ENCODE measurements at regions of chr5 and their contacts with region 1.

Region 1: GRCh38 chr5:151651997-151652645 is 34.6 kb downstream of the SPARC start:
- DNase-seq: peak; percentile 61 to 83 (median 78)
- H3K4me3 ChIP-seq: no peak overlapping the region
- H3K4me3 Mint-ChIP-seq: no peak overlapping the region
- H3K27ac ChIP-seq: no peak overlapping the region
- H3K27ac Mint-ChIP-seq: peak overlapping the region in 1 of 7 donors; percentile 5
- H3K4me1 ChIP-seq: peaks cover 15% of the 10 kb centered on the region in 2 donors
- H3K4me1 Mint-ChIP-seq: peaks cover 15% of the 10 kb centered on the region
- H3K27me3 ChIP-seq: no peaks in the 10 kb centered on the region
- H3K27me3 Mint-ChIP-seq: peaks cover 1 to 3% (median 1%) of the 10 kb centered on the region in 3 donors
- CTCF ChIP-seq: peak; percentile 92

Region 2: GRCh38 chr5:151447174-151448037 is 204.7 kb before region 1 on chr5 and contains the start of gene SLC36A1:
- intact Hi-C with region 1: loop called (anchors 2 to 5 kb)
- DNase-seq: peak; percentile 91 to 93 (median 91)
- H3K4me3 ChIP-seq: peak within 1 kb of the TSS; percentile 79 to 97 (median 84)
- H3K4me3 Mint-ChIP-seq: peak within 1 kb of the TSS; percentile 92 to 97
- H3K27ac ChIP-seq: peak within 1 kb of the TSS; percentile 50 to 96
- H3K27ac Mint-ChIP-seq: peak within 1 kb of the TSS; percentile 89 to 97 (median 94)
- H3K4me1 ChIP-seq: peaks cover 22 to 31% of the 10 kb centered on the region in 2 donors
- H3K4me1 Mint-ChIP-seq: peaks cover 35% of the 10 kb centered on the region
- H3K27me3 ChIP-seq: no peaks in the 10 kb centered on the region
- H3K27me3 Mint-ChIP-seq: peaks cover 0 to 2% (median 0%) of the 10 kb centered on the region in 3 donors
- CTCF ChIP-seq: peak; percentile 95
- polyA plus RNA-seq, gene SLC36A1: 5.3 to 29.4 (median 6.8) TPM

Region 3: DNA sequence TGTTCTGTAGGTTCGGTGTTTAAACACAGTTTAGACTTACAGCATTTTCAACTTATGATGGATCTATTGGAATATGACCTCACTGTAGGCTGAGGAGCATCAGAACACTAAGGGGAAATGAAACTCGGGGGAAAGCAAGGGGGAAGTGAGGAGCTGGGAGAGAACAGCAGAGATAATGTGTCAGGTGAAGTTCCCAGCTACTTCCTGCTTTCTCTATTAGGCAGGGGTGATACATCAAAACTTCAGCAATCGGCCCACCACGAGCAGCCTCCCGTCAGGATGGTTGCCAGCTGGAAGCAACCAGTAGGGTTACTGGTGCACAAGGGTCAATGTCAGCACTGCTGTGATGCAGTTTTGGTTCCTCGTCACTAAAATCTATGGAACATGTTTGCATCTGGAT is 95.3 kb before region 1 on chr5:
- intact Hi-C with region 1: loop called in 1 of 2 experiments (anchors 5 kb)
- DNase-seq: peak; percentile 84 to 95 (median 89)
- H3K4me3 ChIP-seq: peak overlapping the region in 1 of 3 experiments; percentile 17
- H3K4me3 Mint-ChIP-seq: peak overlapping the region in 1 of 2 donors; percentile 26
- H3K27ac ChIP-seq: peak overlapping the region in 1 of 2 donors; percentile 25
- H3K27ac Mint-ChIP-seq: peak overlapping the region in 5 of 7 donors; percentile 69 to 81 (median 75)
- H3K4me1 ChIP-seq: peaks cover 26 to 27% of the 10 kb centered on the region in 2 donors
- H3K4me1 Mint-ChIP-seq: peaks cover 19% of the 10 kb centered on the region
- H3K27me3 ChIP-seq: no peaks in the 10 kb centered on the region
- H3K27me3 Mint-ChIP-seq: peaks cover 0 to 2% (median 0%) of the 10 kb centered on the region in 3 donors
- CTCF ChIP-seq: no peak

Region 4: DNA sequence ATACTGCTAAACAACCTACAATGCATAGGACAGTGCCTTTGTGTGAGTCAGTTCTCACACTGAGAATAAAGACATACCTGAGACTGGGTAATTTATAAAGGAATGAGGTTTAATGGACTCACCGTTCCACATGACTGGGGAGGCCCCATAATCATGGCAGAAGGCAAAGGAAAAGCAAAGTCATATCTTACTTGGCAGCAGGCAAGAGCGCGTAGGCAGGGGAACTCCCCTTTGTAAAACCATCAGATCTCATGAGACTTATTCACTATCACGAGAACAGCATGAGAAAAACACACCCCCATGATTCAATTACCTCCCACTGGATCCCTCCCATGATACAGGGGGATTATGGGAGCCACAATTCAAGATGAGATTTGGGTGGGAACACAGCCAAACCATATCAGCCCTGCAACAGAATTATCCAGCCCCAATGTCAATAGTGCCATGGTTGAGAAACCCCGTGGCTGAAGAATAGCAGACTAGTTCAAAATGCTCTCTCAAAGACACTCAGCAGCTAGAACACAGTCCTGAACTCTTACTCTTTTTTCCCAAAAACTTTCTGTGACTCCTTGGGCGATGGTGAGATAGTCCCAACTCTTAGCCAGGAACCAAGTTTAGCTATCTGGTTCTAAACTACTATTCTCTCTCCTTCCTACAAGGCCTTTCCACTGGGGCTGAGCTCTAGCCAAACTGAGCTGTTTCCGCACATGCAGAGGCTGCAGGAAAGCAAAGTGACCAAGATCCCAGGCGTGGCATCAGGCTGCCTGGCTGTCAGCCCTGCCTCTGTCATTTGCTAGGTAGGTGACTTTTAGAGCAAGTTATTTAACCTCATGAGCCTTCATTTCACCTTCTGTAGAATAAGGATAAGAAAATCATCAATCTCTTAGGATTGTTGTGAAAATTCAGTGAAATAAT is 82.7 kb before region 1 on chr5:
- intact Hi-C with region 1: no loop called
- DNase-seq: no peak
- H3K4me3 ChIP-seq: no peak overlapping the region
- H3K4me3 Mint-ChIP-seq: no peak overlapping the region
- H3K27ac ChIP-seq: no peak overlapping the region
- H3K27ac Mint-ChIP-seq: no peak overlapping the region
- H3K4me1 ChIP-seq: no peaks in the 10 kb centered on the region
- H3K4me1 Mint-ChIP-seq: no peaks in the 10 kb centered on the region
- H3K27me3 ChIP-seq: no peaks in the 10 kb centered on the region
- H3K27me3 Mint-ChIP-seq: peaks cover 2 to 8% (median 5%) of the 10 kb centered on the region in 3 donors
- CTCF ChIP-seq: no peak

Region 5: GRCh38 chr5:151596828-151597539 is 55.1 kb before region 1 on chr5:
- intact Hi-C with region 1: loop called in 1 of 2 experiments (anchors 5 kb)
- DNase-seq: no peak
- H3K4me3 ChIP-seq: no peak overlapping the region
- H3K4me3 Mint-ChIP-seq: no peak overlapping the region
- H3K27ac ChIP-seq: no peak overlapping the region
- H3K27ac Mint-ChIP-seq: peak overlapping the region in 1 of 7 donors; percentile 33
- H3K4me1 ChIP-seq: no peaks in the 10 kb centered on the region
- H3K4me1 Mint-ChIP-seq: peaks cover 8% of the 10 kb centered on the region
- H3K27me3 ChIP-seq: no peaks in the 10 kb centered on the region
- H3K27me3 Mint-ChIP-seq: peaks cover 2 to 3% (median 3%) of the 10 kb centered on the region in 3 donors
- CTCF ChIP-seq: no peak

Measured in CD14-positive monocyte (primary cell).